Calu3 (cell line): ENCODE measurements at regions of chr4 and their contacts with region 1.

Region 1: DNA sequence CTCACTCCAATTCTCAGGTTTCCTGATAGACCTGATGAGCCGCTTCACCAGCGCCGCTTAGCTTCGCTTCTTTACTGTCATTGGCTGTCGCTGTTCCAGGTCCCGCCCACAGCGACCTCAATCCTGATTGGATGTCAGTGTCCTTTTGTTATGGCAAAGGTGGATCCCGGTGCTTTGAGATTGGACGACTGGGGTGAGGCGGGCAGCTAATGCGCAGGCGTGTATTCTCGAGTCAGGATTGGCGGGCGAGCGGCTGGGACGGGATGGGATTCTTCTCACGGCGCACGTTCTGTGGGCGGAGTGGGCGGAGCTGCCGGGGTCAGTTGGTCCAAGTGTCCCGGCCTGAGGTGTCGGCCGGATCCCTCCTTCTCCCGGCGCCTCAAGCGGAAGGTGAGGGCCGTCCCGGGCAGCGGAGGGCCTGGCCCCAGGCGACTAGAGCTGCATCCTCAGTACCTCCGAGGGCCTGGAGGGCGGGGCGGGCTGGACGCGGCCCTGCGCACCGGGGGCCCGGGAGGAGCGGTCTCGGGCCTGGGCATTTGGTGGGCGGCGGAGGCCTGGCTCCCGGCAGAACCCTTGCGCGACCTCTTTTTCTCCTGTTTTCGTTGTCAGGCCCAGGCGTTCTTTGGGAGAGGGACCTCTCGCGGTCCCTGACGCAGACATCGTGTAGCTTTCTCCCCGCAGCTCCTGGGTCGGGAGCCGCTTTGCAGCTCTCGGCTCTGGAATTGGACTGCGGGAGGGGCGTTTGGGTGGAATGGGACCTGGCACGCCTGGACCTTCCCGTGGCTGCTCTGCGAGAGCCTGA is at the start of gene SCOC:
- DNase-seq: peak; percentile 94
- H3K4me3 Mint-ChIP-seq: no peak within 1 kb of the TSS
- H3K27ac Mint-ChIP-seq: no peak within 1 kb of the TSS
- H3K4me1 Mint-ChIP-seq: peaks cover 23% of the 10 kb centered on the region
- H3K27me3 Mint-ChIP-seq: no peaks in the 10 kb centered on the region
- CTCF ChIP-seq: no peak
- total RNA-seq, gene SCOC: 59.4 and 70.1 TPM in 2 replicates

Region 2: GRCh38 chr4:139243448-139244365 is 1129.8 kb before region 1 on chr4:
- CTCF ChIA-PET with region 1: no interaction called
- intact Hi-C with region 1: no loop called
- DNase-seq: no peak
- H3K4me3 Mint-ChIP-seq: no peak overlapping the region
- H3K27ac Mint-ChIP-seq: no peak overlapping the region
- H3K4me1 Mint-ChIP-seq: peaks cover 15% of the 10 kb centered on the region
- H3K27me3 Mint-ChIP-seq: no peaks in the 10 kb centered on the region
- CTCF ChIP-seq: no peak

Region 3: GRCh38 chr4:140222171-140222570 is 151.4 kb before region 1 on chr4:
- CTCF ChIA-PET with region 1: no interaction called
- intact Hi-C with region 1: no loop called
- DNase-seq: no peak
- H3K4me3 Mint-ChIP-seq: no peak overlapping the region
- H3K27ac Mint-ChIP-seq: no peak overlapping the region
- H3K4me1 Mint-ChIP-seq: no peaks in the 10 kb centered on the region
- H3K27me3 Mint-ChIP-seq: no peaks in the 10 kb centered on the region
- CTCF ChIP-seq: no peak

Region 4: GRCh38 chr4:140359562-140360427 is 13.7 kb before region 1 on chr4:
- CTCF ChIA-PET with region 1: interaction called, 17 read pairs
- intact Hi-C with region 1: no loop called
- DNase-seq: peak; percentile 81
- H3K4me3 Mint-ChIP-seq: no peak overlapping the region
- H3K27ac Mint-ChIP-seq: no peak overlapping the region
- H3K4me1 Mint-ChIP-seq: peaks cover 23% of the 10 kb centered on the region
- H3K27me3 Mint-ChIP-seq: no peaks in the 10 kb centered on the region
- CTCF ChIP-seq: peak; percentile 58

Region 5: DNA sequence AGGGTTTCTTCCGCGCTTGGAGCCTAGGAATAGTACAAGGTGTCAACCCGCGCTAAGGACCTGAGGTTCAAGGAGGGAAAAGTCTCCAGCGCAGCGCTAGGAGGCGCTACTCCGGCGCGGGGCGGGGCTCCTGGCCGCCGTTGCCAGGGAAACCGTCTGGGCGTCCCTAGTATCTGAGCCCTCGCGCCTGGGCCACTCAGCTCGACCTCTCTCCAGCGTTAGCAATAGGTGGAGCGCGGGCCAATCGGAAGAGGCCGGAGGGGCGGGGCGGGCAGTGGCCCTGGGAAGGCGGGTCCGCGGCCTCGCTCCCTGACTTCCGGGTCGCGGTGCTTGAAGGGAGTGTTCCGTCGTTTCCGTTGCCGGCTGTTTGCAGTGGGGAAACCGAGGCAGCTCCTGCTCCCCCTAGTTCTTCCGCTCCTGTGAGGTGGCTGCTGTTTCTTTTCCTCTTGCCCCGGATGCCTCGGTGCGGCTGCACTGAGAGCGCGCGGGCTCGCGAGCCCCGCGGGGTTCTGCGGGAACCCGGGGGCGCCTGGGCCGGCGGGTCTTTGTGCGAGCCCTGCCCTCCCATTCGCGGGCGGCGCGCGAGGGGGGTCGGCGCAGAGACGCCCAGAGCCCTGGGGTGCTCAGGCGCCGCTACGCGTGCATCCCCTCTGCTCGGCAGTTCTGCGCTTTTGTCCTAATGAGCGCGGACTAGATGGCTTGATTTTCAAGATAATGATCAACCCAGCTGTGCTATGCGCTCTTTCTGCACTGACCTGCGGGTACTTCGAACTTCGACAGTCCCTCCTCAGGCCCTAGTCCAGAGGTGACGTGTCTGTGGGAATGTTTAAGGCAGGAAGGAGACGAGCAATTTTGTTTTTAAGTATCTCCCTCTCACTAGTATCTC is 150.6 kb after region 1 on chr4 and contains the start of gene ELMOD2:
- CTCF ChIA-PET with region 1: no interaction called
- intact Hi-C with region 1: loop called (anchors 10 kb)
- DNase-seq: peak; percentile 95
- H3K4me3 Mint-ChIP-seq: peak within 1 kb of the TSS; percentile 81
- H3K27ac Mint-ChIP-seq: no peak within 1 kb of the TSS
- H3K4me1 Mint-ChIP-seq: peaks cover 7% of the 10 kb centered on the region
- H3K27me3 Mint-ChIP-seq: no peaks in the 10 kb centered on the region
- CTCF ChIP-seq: peak; percentile 76
- total RNA-seq, gene ELMOD2: 19.6 and 22.5 TPM in 2 replicates

Region 6: GRCh38 chr4:140851032-140851636 is 477.6 kb after region 1 on chr4:
- CTCF ChIA-PET with region 1: no interaction called
- intact Hi-C with region 1: loop called (anchors 10 kb)
- DNase-seq: peak; percentile 44
- H3K4me3 Mint-ChIP-seq: no peak overlapping the region
- H3K27ac Mint-ChIP-seq: no peak overlapping the region
- H3K4me1 Mint-ChIP-seq: no peaks in the 10 kb centered on the region
- H3K27me3 Mint-ChIP-seq: no peaks in the 10 kb centered on the region
- CTCF ChIP-seq: peak; percentile 48

Region 7: DNA sequence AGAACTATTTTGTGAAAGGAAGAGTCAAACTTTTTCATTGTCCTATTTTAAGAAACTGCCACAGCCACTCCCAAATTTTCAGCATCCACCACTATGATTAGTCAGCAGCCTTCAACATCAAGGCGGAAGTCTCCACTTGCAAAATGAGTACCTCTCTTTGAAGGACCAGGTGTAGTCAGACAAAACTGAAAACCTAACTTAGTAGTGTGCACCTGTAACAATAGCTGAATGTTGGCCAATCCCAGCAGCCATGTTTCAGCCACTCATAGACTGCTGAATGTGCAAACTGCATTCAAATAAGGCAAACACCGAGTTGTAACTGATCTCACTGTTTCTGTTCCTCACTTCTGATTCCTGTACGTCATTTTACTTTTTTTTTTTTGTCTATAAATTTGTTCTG is 1603.9 kb after region 1 on chr4:
- CTCF ChIA-PET with region 1: no interaction called
- intact Hi-C with region 1: loop called (anchors 10 kb)
- DNase-seq: no peak
- H3K4me3 Mint-ChIP-seq: no peak overlapping the region
- H3K27ac Mint-ChIP-seq: no peak overlapping the region
- H3K4me1 Mint-ChIP-seq: no peaks in the 10 kb centered on the region
- H3K27me3 Mint-ChIP-seq: no peaks in the 10 kb centered on the region
- CTCF ChIP-seq: no peak